ENCODE measurements at regions of chr10 and their contacts with region 1.

Region 1: DNA sequence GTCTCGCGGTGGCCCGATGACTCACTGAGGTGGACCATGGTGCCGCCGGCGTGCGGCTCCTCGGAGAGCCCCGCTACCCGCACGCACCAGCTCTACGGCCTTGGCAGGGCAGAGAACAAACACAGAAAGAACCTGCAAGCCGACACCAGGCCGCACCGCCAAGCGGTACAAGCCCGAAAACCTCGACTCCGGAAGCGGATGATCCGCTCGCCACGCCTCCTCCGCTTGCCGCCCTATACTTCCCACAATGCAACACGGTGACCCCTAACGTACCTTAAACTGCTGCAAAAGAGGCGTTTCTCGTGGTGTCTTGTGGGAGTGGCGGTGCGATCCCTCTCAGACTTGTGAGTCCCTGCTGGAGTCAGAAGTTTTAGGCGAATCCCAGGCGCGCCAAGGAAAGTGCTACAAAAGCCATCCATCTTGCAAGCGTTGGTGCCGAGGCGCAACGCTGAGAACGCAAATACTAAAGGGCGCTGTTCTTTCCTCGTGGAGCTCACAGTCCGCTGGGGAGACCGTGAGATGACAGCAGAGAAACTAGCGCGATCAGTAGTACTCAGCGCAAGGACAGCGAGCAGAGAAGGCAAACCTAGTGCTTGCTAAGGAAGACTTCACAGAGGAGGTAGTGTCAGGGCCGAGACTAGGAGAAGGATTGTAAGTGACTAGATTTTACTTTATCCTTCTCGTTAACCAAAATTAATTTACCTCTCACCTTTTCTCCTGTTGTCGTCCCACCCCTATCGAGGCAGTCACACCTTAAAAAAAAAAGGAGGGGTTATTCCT is at the start of gene MRPS16:
- H3K4me3 ChIP-seq: peak within 1 kb of the TSS; percentile 64
- H3K27ac ChIP-seq: peak within 1 kb of the TSS; percentile 79
- H3K4me1 ChIP-seq: peaks cover 3% of the 10 kb centered on the region; the same call in 1 of the 2 replicates
- CTCF ChIP-seq: peak; percentile 53; the same call in 1 of the 2 replicates

Region 2: DNA sequence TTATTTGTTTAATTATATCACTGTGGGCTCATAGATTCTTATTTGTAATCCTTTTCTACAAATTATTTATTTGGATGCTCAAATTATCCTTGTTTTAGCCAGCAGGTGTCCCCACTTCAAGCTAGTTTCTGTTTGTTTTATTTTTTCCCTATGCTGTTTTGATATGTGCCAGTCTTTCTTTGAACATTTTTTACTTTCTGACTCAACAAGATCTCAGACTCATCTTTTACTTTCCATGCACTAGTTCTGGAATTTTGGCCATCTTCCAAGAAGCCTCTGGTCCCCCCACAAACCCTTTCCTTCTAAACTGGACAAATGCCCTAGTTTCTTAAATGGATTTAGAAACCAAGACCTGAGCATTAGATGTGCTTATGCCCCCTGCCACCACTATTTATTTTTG is 11.3 kb after region 1 on chr10:
- CTCF ChIA-PET with region 1: interaction called, 21 read pairs
- POLR2A ChIA-PET with region 1: interaction called, 10 read pairs
- H3K4me3 ChIP-seq: no peak overlapping the region
- H3K27ac ChIP-seq: no peak overlapping the region
- H3K4me1 ChIP-seq: no peaks in the 10 kb centered on the region
- CTCF ChIP-seq: no peak

Region 3: DNA sequence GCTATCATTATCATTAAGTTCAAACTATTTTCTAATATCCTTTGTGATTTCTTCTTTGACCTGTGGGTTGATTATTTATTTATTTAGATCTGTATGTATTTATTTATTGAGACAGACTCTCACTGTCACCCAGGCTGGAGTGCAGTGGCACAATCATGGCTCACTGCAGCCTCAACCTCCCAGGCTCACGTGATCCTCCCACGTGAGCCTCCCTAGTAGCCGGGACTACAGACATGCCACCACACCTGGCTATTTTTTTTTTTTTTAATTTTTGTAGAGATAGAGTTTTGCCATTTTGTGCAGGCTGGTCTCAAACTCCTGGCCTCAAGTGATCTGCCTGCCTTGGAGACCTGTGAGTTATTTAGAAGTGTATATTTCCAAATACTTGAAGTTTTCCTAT is 28.5 kb after region 1 on chr10:
- CTCF ChIA-PET with region 1: no interaction called
- POLR2A ChIA-PET with region 1: no interaction called
- H3K4me3 ChIP-seq: no peak overlapping the region
- H3K27ac ChIP-seq: no peak overlapping the region
- H3K4me1 ChIP-seq: no peaks in the 10 kb centered on the region
- CTCF ChIP-seq: no peak

Measured in HEK293 (cell line).